Heart right ventricle (tissue), 16 donors: ENCODE measurements at regions of chr1 and their contacts with region 1.

Region 1: GRCh38 chr1:44799770-44800584 is at the start of gene PLK3:
- DNase-seq: peak; percentile 96 to 99
- ATAC-seq: peak; percentile 95 to 98 (median 96)
- H3K4me3 ChIP-seq: peak within 1 kb of the TSS; percentile 64 to 98 (median 92)
- H3K27ac ChIP-seq: peak within 1 kb of the TSS; percentile 85 to 100 (median 96)
- H3K4me1 ChIP-seq: peaks cover 11 to 48% (median 41%) of the 10 kb centered on the region in 9 donors
- H3K27me3 ChIP-seq: no peaks in the 10 kb centered on the region
- CTCF ChIP-seq: peak; percentile 92 to 98 (median 96)
- total RNA-seq, gene PLK3: 2.9 to 10.3 (median 6.8) TPM

Region 2: DNA sequence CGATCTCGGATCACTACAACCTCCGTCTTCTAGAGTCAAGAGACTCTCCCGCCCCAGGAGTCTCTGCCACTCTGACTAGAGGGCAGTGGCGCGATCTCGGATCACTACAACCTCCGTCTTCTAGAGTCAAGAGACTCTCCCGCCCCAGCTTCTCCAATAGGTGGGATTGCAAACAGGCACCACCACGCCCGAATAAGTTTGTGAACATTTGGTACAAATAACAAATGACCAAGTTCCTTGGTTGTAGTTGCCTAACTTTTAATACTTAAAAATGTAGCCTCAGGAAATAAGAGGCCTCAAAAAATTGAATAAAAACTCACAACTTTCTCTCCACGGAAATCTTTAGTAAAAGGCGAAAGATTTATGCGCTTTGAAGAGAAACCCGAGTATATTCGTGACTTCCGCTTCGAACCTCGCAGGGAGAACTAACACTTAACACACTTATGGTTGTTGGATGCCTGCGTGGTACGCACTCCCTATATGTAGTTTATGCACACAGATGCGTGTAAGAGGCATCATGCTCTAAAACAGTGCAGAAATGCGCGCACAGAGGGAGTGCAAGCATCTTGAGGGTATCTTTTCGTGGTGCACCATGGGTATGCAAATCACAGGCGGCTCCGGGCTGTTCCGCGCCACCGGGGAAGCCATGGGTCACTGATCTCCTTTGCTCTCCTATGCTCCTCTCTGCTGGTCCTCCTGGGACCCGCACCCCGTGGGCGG is 19.8 kb after region 1 on chr1:
- intact Hi-C with region 1: loop called in 3 of 10 experiments (anchors 2 kb)
- DNase-seq: peak; percentile 79 to 84
- ATAC-seq: peak; percentile 88 to 95 (median 92)
- H3K4me3 ChIP-seq: peak overlapping the region; percentile 47 to 76 (median 64)
- H3K27ac ChIP-seq: peak overlapping the region; percentile 85 to 99 (median 96)
- H3K4me1 ChIP-seq: peaks cover 7 to 30% (median 12%) of the 10 kb centered on the region in 9 donors
- H3K27me3 ChIP-seq: no peaks in the 10 kb centered on the region
- CTCF ChIP-seq: peak in 3 of 9 donors; percentile 24 to 35 (median 33)

Region 3: GRCh38 chr1:44835738-44836675 is 36.0 kb after region 1 on chr1:
- intact Hi-C with region 1: loop called in 2 of 10 experiments (anchors 2 to 5 kb)
- DNase-seq: peak; percentile 85 to 87
- ATAC-seq: peak; percentile 78 to 89 (median 84)
- H3K4me3 ChIP-seq: no peak overlapping the region
- H3K27ac ChIP-seq: peak overlapping the region in 1 of 10 donors; percentile 8
- H3K4me1 ChIP-seq: peaks cover 0 to 19% (median 0%) of the 10 kb centered on the region in 9 donors
- H3K27me3 ChIP-seq: no peaks in the 10 kb centered on the region
- CTCF ChIP-seq: peak; percentile 74 to 96 (median 86)

Region 4: DNA sequence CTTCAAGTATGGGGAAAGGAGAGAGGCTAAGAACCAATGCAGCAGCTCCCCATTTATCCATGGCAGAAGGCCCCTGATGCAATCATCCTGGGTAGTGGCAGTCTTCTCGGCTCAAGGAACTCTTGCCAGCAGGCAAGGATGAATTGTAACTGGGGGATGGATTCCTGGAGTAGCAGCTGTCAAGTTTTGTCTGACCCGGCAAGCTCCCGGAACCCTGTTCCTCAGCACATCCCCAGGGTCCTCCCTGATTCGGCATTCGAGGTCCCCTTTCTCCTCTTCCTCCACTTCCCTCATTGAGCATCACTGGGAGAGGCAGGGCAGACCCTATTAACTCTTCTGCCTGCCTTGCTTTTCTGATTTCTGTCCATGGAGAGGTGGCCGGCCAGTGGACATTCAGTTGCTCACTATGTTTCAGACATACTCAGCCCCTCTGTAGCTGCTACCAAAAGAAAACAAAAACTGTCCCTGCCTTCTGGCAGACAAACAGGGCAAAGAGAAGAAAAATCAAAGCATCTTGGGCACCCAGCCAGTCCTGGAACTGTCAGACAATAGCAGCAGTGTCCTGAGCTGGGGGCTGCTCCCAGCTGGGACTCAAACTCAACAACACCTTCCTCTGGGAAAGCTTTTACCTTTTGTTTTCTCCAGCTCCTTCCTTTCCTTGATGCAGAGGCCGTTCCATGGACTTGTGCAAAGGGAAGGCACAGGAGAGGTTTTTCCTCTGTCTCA is 48.6 kb after region 1 on chr1:
- intact Hi-C with region 1: no loop called
- DNase-seq: no peak
- ATAC-seq: peak in 3 of 8 donors; percentile 19 to 40 (median 34)
- H3K4me3 ChIP-seq: no peak overlapping the region
- H3K27ac ChIP-seq: peak overlapping the region in 4 of 10 donors; percentile 33 to 63 (median 42)
- H3K4me1 ChIP-seq: peaks cover 0 to 25% (median 9%) of the 10 kb centered on the region in 9 donors
- H3K27me3 ChIP-seq: peaks cover 0 to 4% (median 0%) of the 10 kb centered on the region in 7 donors
- CTCF ChIP-seq: no peak